ENCODE measurements at regions of chr17 and their contacts with region 1.

Region 1: GRCh38 chr17:73231841-73232586 is 29.7 kb downstream of the CPSF4L start:
- DNase-seq: peak; percentile 93
- H3K4me3 Mint-ChIP-seq: peak overlapping the region; percentile 87
- H3K27ac Mint-ChIP-seq: peak overlapping the region; percentile 93
- H3K4me1 Mint-ChIP-seq: peaks cover 52% of the 10 kb centered on the region
- H3K27me3 Mint-ChIP-seq: no peaks in the 10 kb centered on the region

Region 2: GRCh38 chr17:73096866-73097265 is 135.1 kb before region 1 on chr17:
- intact Hi-C with region 1: no loop called
- DNase-seq: no peak
- H3K4me3 Mint-ChIP-seq: no peak overlapping the region
- H3K27ac Mint-ChIP-seq: no peak overlapping the region
- H3K4me1 Mint-ChIP-seq: peaks cover 2% of the 10 kb centered on the region
- H3K27me3 Mint-ChIP-seq: peaks cover 7% of the 10 kb centered on the region

Region 3: GRCh38 chr17:73210002-73210678 is 21.9 kb before region 1 on chr17:
- intact Hi-C with region 1: loop called (anchors 2 kb)
- DNase-seq: no peak
- H3K4me3 Mint-ChIP-seq: no peak overlapping the region
- H3K27ac Mint-ChIP-seq: peak overlapping the region; percentile 42
- H3K4me1 Mint-ChIP-seq: peaks cover 26% of the 10 kb centered on the region
- H3K27me3 Mint-ChIP-seq: no peaks in the 10 kb centered on the region

Region 4: DNA sequence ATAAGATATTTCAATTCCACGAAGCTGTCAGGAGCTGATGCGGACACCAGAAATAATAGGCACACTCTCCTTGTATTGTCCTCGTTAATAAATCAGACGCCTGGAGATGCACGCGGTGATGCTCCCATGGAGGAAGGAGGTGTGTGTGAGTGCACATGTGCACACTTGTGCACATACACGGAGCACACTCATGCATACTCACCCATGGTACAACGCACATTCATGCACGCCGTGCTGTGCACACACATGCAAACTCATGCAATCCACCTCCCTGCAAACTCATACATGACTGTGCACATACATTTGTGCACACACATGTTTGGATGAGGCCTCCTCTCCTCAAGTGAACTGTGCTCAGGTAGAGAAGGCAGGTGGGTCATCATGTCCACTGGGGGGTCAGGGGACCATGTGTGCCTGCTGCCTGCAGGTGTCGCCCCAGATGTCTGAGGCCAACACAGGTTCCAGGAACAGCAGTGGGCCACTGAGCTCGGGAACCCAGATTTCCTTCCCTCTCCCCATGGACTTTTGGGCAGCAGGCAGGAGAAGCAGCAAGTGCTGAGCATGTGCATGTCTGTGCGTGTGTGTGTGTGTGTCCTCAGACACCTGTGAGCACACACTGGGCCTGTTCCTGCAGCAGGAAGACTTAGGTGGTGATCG is 246.9 kb after region 1 on chr17:
- intact Hi-C with region 1: no loop called
- DNase-seq: no peak
- H3K4me3 Mint-ChIP-seq: no peak overlapping the region
- H3K27ac Mint-ChIP-seq: no peak overlapping the region
- H3K4me1 Mint-ChIP-seq: no peaks in the 10 kb centered on the region
- H3K27me3 Mint-ChIP-seq: peaks cover 5% of the 10 kb centered on the region

Region 5: DNA sequence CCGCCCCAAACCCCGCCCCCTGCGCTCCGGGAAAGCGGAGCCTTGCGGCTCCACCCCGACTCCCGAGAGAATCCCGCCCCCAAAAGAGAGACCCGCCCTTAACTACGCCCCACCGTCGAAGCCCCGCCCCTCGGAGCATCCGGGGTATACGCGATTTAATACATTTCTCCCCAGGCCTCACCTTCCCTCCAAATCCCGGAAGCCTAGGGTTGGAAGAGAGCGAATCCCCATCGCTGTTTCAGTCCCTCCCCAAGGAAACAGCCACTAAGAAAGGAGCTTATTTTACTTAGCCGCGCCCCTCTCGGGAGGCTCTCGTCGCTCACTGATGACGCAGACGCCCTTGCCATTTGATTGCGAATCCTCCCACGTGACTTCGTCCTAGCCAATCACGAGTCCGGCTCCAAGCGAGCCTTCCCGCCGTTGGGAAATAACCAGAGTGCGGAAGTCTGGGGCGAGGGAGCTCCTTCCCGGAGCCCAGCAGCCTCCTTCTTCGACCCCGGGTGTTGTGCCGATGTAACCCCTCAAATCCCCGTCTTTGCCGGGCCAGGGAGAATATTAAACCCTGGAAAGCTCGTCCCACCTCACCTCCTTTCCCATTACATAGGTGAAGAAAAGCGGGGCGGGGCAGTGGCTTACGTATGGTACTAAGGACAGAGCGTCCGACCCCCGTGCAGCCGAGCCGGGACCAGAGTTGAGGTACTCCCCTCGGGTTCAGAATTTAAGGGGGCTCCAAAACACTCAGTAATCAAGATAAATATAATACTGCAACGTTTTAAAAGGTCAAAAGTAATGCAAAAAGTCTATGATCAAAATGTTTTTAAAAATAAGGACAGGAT is 1641.2 kb after region 1 on chr17:
- intact Hi-C with region 1: loop called (anchors 10 kb)
- DNase-seq: peak; percentile 97
- H3K4me3 Mint-ChIP-seq: peak overlapping the region; percentile 85
- H3K27ac Mint-ChIP-seq: peak overlapping the region; percentile 73
- H3K4me1 Mint-ChIP-seq: peaks cover 17% of the 10 kb centered on the region
- H3K27me3 Mint-ChIP-seq: peaks cover 2% of the 10 kb centered on the region